HEK293 (cell line): ENCODE measurements at regions of chr12 and their contacts with region 1.

Region 1: GRCh38 chr12:21751517-21751916 is 23.0 kb downstream of the KCNJ8 start:
- H3K4me3 ChIP-seq: no peak overlapping the region
- H3K27ac ChIP-seq: peak overlapping the region; percentile 56
- H3K4me1 ChIP-seq: peaks cover 12% of the 10 kb centered on the region
- CTCF ChIP-seq: no peak

Region 2: DNA sequence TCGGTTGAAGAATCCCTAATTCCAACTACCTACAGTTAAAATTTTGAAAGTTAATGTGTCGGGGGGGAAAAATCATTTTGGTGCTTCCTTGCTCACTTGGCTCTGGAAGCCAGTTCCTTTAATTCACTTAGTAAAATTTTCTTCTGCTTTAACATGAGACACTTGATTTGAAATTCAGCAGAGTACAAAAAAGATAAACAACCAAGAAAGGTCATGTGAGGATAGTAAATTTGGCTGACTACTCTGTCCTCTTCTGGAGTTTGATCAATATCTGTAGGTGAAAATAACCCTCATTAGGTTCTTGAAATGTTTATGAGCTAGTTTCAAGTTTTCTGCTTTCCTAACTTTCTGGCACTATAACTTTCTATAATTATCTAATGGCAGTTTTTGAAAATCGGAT is 20.4 kb before region 1 on chr12:
- CTCF ChIA-PET with region 1: no interaction called
- POLR2A ChIA-PET with region 1: interaction called, 11 read pairs
- H3K4me3 ChIP-seq: no peak overlapping the region
- H3K27ac ChIP-seq: no peak overlapping the region
- H3K4me1 ChIP-seq: no peaks in the 10 kb centered on the region
- CTCF ChIP-seq: no peak